ENCODE measurements at regions of chr6 and their contacts with region 1.

Region 1: DNA sequence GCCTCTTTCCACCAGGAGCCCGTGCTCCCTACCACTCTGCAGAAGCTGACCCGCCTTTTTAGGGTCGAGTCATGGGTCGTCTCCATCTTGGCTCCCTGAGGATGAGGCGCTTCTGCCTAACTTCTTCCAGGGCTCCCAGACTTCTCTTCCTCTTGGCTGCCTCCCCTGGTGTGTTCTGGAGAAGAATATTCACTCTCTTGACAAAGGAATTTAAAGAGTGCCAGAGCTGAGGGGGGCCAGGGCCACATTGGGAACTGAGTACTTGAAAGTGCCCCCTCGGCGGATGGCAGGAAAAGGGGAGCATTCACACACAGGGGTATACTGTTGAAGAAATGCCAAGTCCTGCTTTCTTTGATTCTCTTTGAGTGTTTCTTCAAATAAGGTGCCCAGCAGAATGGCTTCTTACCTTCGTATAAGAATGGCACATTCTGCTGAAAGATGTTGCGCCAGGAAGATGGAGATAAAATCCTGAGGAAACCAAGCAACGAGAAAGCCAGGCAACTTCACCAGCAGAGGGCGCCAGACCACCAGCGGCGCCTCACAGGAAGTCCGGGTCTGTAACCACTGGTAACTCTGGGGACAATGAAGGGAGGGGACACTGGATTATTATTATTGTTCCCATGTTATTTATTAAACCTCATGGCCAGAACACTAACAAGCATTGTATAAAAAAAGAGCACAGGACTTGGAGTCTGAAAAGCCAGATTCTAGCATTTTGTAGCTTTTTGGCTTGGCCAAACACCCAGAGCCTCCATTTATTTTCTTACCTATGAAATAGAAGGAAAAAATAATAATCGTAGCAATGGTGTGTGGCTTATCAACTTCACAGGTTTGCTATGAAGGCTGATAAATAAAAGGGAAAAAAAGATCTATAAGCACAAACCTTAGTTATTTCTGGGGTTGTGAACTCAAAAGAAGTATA is 176.7 kb downstream of the HACE1 start:
- DNase-seq: peak; percentile 52
- H3K4me3 Mint-ChIP-seq: no peak overlapping the region
- H3K27ac Mint-ChIP-seq: peak overlapping the region; percentile 20
- H3K4me1 Mint-ChIP-seq: peaks cover 21% of the 10 kb centered on the region
- H3K27me3 Mint-ChIP-seq: peaks cover 2% of the 10 kb centered on the region

Region 2: GRCh38 chr6:104606361-104606760 is 76.6 kb before region 1 on chr6:
- intact Hi-C with region 1: loop called (anchors 10 kb)
- DNase-seq: no peak
- H3K4me3 Mint-ChIP-seq: no peak overlapping the region
- H3K27ac Mint-ChIP-seq: no peak overlapping the region
- H3K4me1 Mint-ChIP-seq: peaks cover 22% of the 10 kb centered on the region
- H3K27me3 Mint-ChIP-seq: no peaks in the 10 kb centered on the region

Region 3: DNA sequence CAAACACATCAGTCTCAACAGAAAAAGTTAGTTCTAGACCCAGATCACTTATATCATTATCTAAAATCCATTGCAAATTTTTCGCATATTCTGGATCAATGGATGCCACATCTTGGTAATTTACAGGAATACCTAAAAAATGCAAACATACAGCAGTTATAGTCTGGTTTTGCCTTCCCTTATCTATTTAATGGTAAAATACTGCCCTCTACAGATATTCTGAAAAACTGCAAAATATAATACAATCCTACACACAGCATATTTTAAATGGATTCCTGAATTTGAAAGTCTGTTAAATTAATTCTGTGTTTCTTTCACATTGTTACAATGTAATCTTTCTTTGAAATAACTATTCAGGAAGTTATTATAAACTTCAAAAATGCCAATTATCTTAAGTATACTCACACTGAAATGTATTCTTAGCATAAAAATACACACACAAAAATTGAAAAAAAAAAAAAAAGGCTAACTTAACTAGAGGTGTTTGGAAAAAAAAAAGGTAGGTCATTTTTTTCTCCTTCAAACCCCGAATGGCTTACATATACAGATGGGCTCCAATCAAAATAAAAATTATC is 88.4 kb after region 1 on chr6:
- intact Hi-C with region 1: loop called (anchors 1 kb)
- DNase-seq: no peak
- H3K4me3 Mint-ChIP-seq: no peak overlapping the region
- H3K27ac Mint-ChIP-seq: no peak overlapping the region
- H3K4me1 Mint-ChIP-seq: peaks cover 5% of the 10 kb centered on the region
- H3K27me3 Mint-ChIP-seq: no peaks in the 10 kb centered on the region

Region 4: GRCh38 chr6:104859225-104860146 is 176.5 kb after region 1 on chr6 and contains the start of gene HACE1:
- intact Hi-C with region 1: loop called (anchors 2 kb)
- DNase-seq: peak; percentile 87
- H3K4me3 Mint-ChIP-seq: peak within 1 kb of the TSS; percentile 95
- H3K27ac Mint-ChIP-seq: peak within 1 kb of the TSS; percentile 82
- H3K4me1 Mint-ChIP-seq: peaks cover 24% of the 10 kb centered on the region
- H3K27me3 Mint-ChIP-seq: peaks cover 2% of the 10 kb centered on the region
- total RNA-seq, gene HACE1: 16.9 and 19.3 TPM in 2 replicates

Region 5: DNA sequence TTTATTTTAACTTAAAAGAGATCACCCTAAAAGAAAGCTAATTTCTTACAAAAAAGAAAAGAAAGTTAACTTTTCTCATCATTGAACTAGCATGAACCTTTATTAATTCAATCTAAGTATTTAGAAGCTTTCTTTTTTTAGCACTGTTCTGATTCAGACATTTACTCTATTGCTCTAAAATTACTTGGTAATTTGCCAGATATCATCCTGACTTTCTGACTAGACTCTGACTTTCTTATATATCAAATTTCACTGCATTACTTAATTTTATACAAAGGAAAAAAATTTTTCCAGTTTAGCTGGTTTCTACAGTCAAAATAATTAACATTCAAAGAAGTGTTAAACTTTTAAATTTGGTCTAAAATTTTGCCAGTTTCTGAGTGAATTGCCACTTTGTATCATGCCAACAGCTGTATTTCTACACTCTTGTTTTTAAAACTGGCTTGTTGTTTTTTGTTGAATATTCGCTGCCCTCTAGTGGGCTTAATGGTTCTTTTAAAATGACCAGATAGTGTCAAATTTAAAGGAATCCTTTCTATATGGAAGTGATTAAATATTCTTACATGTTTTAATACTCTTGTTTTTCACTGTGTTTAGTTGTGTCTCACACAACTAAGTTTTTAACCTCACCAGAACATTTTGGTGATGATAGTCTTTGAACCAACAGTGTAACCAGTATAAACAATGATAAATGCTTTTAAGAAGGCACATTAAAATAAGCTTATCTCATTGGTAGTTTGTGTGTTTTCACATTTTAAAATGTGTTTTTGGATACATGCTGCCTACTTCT is 394.8 kb after region 1 on chr6:
- intact Hi-C with region 1: loop called (anchors 1 kb)
- DNase-seq: no peak
- H3K4me3 Mint-ChIP-seq: no peak overlapping the region
- H3K27ac Mint-ChIP-seq: no peak overlapping the region
- H3K4me1 Mint-ChIP-seq: no peaks in the 10 kb centered on the region
- H3K27me3 Mint-ChIP-seq: peaks cover 21% of the 10 kb centered on the region

Measured in activated T-helper 1 cell treated with anti-CD3 and anti-CD28 coated beads, Interleukin-12 subunit alpha, Interleukin-12 subunit beta, Interleukin-2, Interleukin-4 antibody, amounts not matched to agents 30 ng/mL and 10 ng/mL and 1 ng/mL, durations not matched to agents 14 hours and 24 hours and 36 hours (primary cell).